Posterior cingulate gyrus (tissue), 11 donors: ENCODE measurements at regions of chr2 and their contacts with region 1.

Region 1: DNA sequence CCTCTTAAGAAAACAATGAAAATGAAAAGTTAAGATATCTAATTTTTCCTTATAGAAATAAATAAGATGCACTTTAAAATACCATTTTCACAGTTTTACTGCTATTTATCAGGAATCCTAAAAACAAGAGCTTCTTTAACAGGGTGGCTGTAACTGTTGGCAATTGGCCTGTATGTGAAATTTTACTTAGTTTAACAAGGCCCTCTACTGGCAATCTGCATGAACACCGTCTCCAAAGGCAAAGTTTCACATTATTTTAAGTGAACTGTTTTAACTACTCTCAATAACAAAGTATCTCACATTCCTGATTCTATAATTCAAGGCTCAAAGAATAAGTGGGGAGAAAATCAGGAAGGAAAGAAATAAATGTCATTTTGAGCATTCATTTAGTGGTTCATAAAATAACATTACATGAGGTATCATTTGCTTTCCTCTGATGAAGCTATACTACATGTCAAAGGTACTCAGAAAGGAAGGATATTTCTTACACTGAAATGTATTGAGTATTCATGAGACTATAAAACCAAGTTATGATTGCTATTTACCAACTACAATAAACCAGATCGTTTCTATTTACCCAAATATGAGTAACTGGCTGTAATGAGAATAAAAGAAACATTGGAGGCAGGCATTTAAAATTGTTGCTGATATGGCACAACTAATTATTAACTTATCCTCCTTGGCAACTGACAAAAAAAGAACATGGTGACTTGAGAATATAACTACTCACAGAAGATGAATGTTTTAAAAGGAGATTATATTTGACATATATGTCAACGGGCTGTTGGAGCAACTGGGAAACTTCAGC is 7.0 kb downstream of the NCKAP5 start:
- DNase-seq: no peak

Region 2: GRCh38 chr2:132547074-132547687 is 1014.1 kb before region 1 on chr2:
- intact Hi-C with region 1: loop called (anchors 10 kb)
- DNase-seq: peak in 9 of 10 donors; percentile 39 to 93 (median 82)

Region 3: DNA sequence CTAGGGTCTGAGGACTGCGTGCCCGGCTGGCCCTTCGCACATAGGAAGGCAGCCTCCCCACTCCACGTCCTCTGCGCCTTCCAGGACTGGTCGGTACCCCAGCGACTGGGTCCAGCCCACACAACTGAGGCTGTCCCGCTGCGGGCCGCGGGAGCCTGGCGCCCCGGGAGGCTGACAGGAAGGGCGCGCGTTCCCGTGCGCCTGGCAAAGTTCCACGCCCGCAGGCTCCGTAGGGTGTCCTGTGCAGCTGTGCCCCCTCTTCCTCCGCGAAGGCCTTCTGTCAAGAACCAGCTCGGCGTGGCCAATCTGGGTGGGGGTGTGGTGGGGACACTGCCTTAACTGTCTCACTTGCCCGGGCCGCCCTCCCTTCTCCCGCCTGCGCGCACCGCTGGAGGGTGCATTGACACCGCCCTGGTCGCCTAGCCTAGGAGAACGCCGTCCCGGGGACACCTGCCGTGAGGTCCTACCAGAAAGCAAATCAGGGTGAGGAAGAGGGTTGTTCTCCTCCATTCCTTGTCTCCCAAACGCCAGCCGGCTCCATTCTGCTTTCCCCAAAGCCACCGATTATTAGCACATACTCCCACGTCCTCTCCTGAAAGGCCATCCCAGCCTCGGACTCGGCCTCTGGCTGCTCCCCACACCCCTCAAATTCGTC is 890.6 kb before region 1 on chr2:
- intact Hi-C with region 1: loop called (anchors 10 kb)
- DNase-seq: peak in 9 of 10 donors; percentile 18 to 90 (median 45)

Region 4: GRCh38 chr2:133171393-133172004 is 389.8 kb before region 1 on chr2:
- intact Hi-C with region 1: loop called (anchors 2 kb)
- DNase-seq: no peak

Region 5: DNA sequence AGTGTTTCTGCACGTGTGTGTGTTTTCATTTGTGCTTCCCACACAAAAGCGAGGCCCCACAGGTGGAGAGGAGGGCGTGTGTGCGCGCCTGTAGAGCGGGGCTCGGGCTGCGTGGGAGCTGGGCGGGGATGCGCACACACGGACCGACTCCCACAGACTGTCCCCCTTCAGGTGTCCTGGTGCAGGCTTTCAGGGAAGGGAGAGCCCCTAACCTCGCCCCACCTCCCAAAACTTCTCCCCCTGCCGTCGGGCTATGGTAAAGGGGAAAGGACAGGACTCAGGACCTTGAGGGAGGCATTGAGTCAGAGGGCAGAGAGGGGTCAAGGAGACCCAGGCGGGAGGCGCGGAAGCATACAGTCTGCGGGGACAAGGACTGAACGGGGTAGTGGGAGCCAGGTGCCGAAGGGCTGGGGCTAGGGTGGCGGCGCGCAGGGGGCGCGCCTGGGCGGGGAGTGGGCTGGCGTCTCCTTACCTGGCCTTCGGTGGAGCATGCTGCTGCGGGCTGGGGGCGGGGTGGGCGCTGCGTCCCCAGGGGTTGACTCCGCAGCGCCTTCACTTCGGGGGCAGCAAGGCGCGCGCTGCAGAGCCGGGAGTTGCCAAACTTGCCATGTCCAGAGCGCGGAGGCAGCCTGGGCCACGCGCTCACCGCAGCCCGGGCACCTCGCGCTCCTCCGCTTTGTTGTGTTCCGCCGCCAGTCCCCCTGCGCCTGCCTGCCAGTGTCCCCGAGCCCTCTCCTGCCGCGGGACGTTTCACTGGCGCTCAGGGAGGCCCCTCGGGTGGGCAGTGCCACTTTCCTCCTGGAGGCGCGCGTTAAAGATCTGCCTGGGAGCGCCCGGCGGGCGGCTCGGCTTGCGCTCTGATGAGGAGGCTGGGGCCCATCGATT is 295.0 kb before region 1 on chr2:
- intact Hi-C with region 1: loop called (anchors 5 kb)
- DNase-seq: peak in 3 of 10 donors; percentile 72 to 84 (median 83)

Region 6: DNA sequence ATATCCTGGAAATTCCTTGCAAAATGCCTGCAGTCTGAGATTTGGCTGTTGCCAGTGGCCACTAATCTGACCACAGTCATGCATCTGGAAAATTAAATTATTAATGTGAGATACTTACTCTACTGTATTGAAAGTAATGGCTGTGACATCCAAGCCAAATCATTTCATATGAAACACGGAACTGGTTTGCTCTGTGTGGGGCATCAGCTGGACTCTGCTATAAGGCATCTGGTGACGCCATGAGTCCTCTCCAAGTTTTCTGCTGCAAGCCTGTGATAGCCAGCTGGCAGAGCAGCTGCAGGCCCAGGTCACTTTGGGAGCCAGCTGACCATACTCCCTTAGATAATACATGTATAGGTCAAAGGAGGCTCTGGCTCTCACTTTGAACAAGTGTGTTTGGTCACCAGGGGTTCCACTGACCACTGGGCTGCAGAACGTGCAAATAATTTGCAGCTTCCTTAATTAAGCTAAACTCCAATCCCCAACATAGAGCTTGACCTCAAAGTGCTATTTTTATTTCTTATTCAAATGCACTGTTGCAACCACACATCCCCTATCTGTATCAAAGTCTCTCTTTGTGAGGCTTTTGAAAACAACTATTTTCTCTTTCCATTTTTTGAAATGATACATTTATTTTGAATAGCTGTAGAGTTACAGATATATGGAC is 145.9 kb before region 1 on chr2:
- intact Hi-C with region 1: loop called (anchors 10 kb)
- DNase-seq: peak in 4 of 10 donors; percentile 13 to 79 (median 37)

Region 7: DNA sequence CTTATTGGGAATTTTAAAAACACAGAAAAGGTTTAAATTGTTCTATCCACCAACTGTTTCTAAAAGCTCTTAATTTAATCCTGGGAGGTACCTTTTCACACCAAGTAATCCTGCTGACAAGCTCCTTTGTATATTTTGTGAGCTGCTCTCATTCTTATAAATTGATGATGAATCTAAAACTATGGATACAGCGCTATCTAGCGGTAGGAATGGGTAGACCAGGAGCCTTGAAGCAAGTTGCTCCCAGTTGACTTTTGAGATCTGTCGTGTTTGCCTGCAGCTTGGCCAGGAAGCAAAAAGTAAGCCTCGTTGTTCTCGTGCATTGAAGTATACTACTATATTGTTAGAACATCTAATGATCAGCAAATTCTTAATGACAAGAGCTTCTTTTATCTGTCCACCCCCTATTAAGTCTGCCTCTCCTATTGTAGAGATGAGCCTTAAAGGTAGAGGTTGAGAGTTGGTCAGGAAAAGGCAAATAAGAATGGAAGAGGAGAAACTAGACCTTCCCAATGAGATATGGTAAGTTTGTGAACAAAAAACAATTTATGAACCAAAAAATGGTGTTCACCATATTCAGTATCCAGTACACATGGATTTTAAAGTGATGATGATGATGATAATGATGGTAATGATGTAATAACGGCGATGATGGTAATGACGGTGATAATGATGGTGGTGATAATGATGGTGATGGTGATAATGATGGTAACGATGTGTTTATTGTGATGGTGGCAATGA is 219.0 kb after region 1 on chr2:
- intact Hi-C with region 1: loop called (anchors 5 kb)
- DNase-seq: peak in 5 of 10 donors; percentile 18 to 57 (median 39)

Region 8: GRCh38 chr2:133862400-133862977 is 301.2 kb after region 1 on chr2:
- intact Hi-C with region 1: no loop called
- DNase-seq: no peak